Panc1 (cell line): ENCODE measurements at regions of chr12 and their contacts with region 1.

Region 1: GRCh38 chr12:80912901-80913694 is 24.6 kb downstream of the LIN7A start:
- DNase-seq: no peak
- ATAC-seq: no peak
- H3K4me3 ChIP-seq: no peak overlapping the region
- H3K27ac ChIP-seq: no peak overlapping the region
- H3K4me1 ChIP-seq: no peaks in the 10 kb centered on the region
- H3K27me3 ChIP-seq: no peaks in the 10 kb centered on the region
- CTCF ChIP-seq: no peak

Region 2: GRCh38 chr12:80877721-80878265 is 35.3 kb before region 1 on chr12:
- CTCF ChIA-PET with region 1: no interaction called
- POLR2A ChIA-PET with region 1: interaction called, 14 read pairs
- in situ Hi-C with region 1: no loop called
- intact Hi-C with region 1: no loop called
- DNase-seq: no peak
- ATAC-seq: no peak
- H3K4me3 ChIP-seq: no peak overlapping the region
- H3K27ac ChIP-seq: no peak overlapping the region
- H3K4me1 ChIP-seq: no peaks in the 10 kb centered on the region
- H3K27me3 ChIP-seq: no peaks in the 10 kb centered on the region
- CTCF ChIP-seq: no peak

Region 3: GRCh38 chr12:81627336-81628189 is 714.5 kb after region 1 on chr12:
- CTCF ChIA-PET with region 1: no interaction called
- POLR2A ChIA-PET with region 1: no interaction called
- in situ Hi-C with region 1: no loop called
- intact Hi-C with region 1: no loop called
- DNase-seq: peak; percentile 24
- ATAC-seq: no peak
- H3K4me3 ChIP-seq: no peak overlapping the region
- H3K27ac ChIP-seq: no peak overlapping the region
- H3K4me1 ChIP-seq: no peaks in the 10 kb centered on the region
- H3K27me3 ChIP-seq: no peaks in the 10 kb centered on the region
- CTCF ChIP-seq: peak; percentile 65; the same call in 1 of the 2 replicates